Natural killer cell (primary cell): ENCODE measurements at regions of chrX and their contacts with region 1.

Region 1: DNA sequence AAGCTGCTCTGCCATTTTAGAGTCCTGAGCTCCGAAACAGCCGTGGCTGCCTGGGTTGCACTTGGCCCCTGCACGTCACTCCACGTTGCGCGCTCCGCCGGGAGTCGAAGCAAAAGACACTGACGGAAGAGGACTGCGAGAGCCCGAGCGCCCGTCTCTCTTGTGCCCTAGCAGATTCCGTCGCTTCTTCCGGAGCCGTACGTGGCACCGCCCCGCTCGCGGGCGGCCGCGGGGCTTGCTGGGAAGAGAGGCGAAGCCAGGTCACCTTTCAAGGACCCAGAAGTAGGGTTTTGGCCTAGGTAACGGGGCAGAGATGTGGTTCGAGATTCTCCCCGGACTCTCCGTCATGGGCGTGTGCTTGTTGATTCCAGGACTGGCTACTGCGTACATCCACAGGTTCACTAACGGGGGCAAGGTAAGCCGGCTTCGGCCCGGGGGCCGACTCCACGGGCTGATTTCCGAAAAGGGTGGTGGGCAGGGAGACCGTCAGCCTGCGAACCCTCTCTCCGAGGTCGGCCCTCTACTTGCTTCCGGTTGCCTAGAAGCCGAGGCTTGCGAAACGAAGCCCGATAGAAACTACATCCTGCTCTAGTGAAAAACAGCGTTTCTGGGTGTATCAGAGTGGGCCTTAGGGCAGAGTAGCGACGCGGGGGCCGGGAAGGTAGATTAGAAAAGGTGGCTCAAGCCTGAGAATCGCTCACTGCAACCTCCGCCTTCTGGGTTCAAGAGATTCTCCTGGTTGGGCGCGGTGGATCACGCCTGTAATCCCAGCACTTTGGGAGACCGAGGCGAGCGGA is at the starts of genes NDUFA1 and RNF113A:
- DNase-seq: peak; percentile 78 to 93
- ATAC-seq: peak; percentile 86 to 96 (median 91)
- H3K4me3 ChIP-seq: peak within 1 kb of the TSS; percentile 65
- H3K4me3 Mint-ChIP-seq: peak within 1 kb of the TSS; percentile 97
- H3K27ac ChIP-seq: peak within 1 kb of the TSS; percentile 97
- H3K27ac Mint-ChIP-seq: peak within 1 kb of the TSS; percentile 97 to 99
- H3K4me1 ChIP-seq: peaks cover 13% of the 10 kb centered on the region
- H3K4me1 Mint-ChIP-seq: peaks cover 19 to 25% of the 10 kb centered on the region in 2 donors
- H3K27me3 ChIP-seq: no peaks in the 10 kb centered on the region
- H3K27me3 Mint-ChIP-seq: no peaks in the 10 kb centered on the region
- CTCF ChIP-seq: no peak
- total RNA-seq, gene NDUFA1: 43.6 to 56.8 (median 54.9) TPM
- total RNA-seq, gene RNF113A: 29.6 to 45.9 (median 34.7) TPM

Region 2: GRCh38 chrX:119359618-119360382 is 512.0 kb before region 1 on chrX:
- intact Hi-C with region 1: no loop called
- DNase-seq: no peak
- ATAC-seq: no peak
- H3K4me3 ChIP-seq: no peak overlapping the region
- H3K4me3 Mint-ChIP-seq: no peak overlapping the region
- H3K27ac ChIP-seq: no peak overlapping the region
- H3K27ac Mint-ChIP-seq: no peak overlapping the region
- H3K4me1 ChIP-seq: no peaks in the 10 kb centered on the region
- H3K4me1 Mint-ChIP-seq: no peaks in the 10 kb centered on the region
- H3K27me3 ChIP-seq: no peaks in the 10 kb centered on the region
- H3K27me3 Mint-ChIP-seq: peaks cover 0 to 13% of the 10 kb centered on the region in 2 donors
- CTCF ChIP-seq: no peak

Region 3: GRCh38 chrX:119468930-119469635 is 402.7 kb before region 1 on chrX:
- intact Hi-C with region 1: loop called (anchors 5 kb)
- DNase-seq: peak; percentile 85 to 92
- ATAC-seq: peak; percentile 76 to 93 (median 78)
- H3K4me3 ChIP-seq: peak overlapping the region; percentile 98
- H3K4me3 Mint-ChIP-seq: peak overlapping the region; percentile 89
- H3K27ac ChIP-seq: peak overlapping the region; percentile 97
- H3K27ac Mint-ChIP-seq: peak overlapping the region; percentile 87 to 92
- H3K4me1 ChIP-seq: peaks cover 15% of the 10 kb centered on the region
- H3K4me1 Mint-ChIP-seq: peaks cover 0 to 6% of the 10 kb centered on the region in 2 donors
- H3K27me3 ChIP-seq: no peaks in the 10 kb centered on the region
- H3K27me3 Mint-ChIP-seq: no peaks in the 10 kb centered on the region
- CTCF ChIP-seq: peak; percentile 69

Region 4: GRCh38 chrX:119852382-119853353 is 19.1 kb before region 1 on chrX and contains the start of gene UPF3B:
- intact Hi-C with region 1: loop called (anchors 1 kb)
- DNase-seq: peak; percentile 85 to 97
- ATAC-seq: peak; percentile 94 to 100 (median 95)
- H3K4me3 ChIP-seq: peak within 1 kb of the TSS; percentile 100
- H3K4me3 Mint-ChIP-seq: peak within 1 kb of the TSS; percentile 100
- H3K27ac ChIP-seq: peak within 1 kb of the TSS; percentile 98
- H3K27ac Mint-ChIP-seq: peak within 1 kb of the TSS; percentile 99
- H3K4me1 ChIP-seq: peaks cover 12% of the 10 kb centered on the region
- H3K4me1 Mint-ChIP-seq: peaks cover 14 to 15% of the 10 kb centered on the region in 2 donors
- H3K27me3 ChIP-seq: no peaks in the 10 kb centered on the region
- H3K27me3 Mint-ChIP-seq: peaks cover 0 to 8% of the 10 kb centered on the region in 2 donors
- CTCF ChIP-seq: no peak
- total RNA-seq, gene UPF3B: 9.3 to 16.4 (median 12.4) TPM